ENCODE measurements at regions of chr4 and their contacts with region 1.

Region 1: GRCh38 chr4:25439918-25440477 is 62.9 kb downstream of the ANAPC4 start:
- DNase-seq: no peak
- ATAC-seq: peak; percentile 70 to 79
- H3K4me3 ChIP-seq: no peak overlapping the region
- H3K27ac ChIP-seq: no peak overlapping the region
- H3K4me1 ChIP-seq: peaks cover 13% of the 10 kb centered on the region
- H3K27me3 ChIP-seq: no peaks in the 10 kb centered on the region
- CTCF ChIP-seq: peak; percentile 92

Region 2: DNA sequence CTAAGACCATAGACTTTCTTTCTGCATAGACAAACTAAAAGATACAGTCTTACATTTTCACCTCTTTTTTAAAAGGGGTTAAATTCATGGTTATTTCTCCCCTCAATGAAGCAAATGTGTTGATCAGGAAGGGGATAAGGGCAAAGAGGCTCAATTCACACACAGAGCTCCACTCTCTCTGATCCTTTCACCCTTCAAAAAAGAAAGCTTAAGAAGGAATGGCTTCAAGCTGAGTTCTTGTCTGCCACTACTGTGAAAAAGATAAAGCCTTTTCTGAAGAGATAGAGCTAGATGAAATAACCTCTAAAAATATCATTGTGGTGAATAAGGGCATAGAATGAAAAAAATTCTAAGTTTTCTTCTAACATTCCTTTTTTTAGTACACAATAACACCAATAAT is 308.1 kb before region 1 on chr4:
- intact Hi-C with region 1: no loop called
- DNase-seq: no peak
- ATAC-seq: no peak
- H3K4me3 ChIP-seq: no peak overlapping the region
- H3K27ac ChIP-seq: no peak overlapping the region
- H3K4me1 ChIP-seq: no peaks in the 10 kb centered on the region
- H3K27me3 ChIP-seq: no peaks in the 10 kb centered on the region
- CTCF ChIP-seq: no peak

Region 3: DNA sequence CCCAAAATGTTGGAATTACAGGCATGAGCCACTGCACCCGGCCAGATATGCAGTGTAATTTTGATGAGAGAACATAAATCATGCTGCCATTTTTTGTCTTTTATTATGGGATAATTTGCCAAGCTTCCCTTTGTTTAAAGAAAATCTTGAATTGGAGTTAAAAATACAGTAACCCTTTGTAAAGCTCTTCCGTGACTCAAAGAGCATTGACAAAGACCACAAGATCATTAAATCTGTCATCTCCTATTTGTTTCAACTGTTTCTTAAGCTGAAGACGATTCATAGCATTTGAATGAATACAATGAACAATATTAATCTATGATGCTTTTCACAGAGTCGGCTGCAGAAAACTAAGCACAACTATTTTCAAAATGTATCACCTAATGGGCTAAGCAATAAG is 69.6 kb after region 1 on chr4:
- intact Hi-C with region 1: no loop called
- DNase-seq: no peak
- ATAC-seq: no peak
- H3K4me3 ChIP-seq: no peak overlapping the region
- H3K27ac ChIP-seq: no peak overlapping the region
- H3K4me1 ChIP-seq: no peaks in the 10 kb centered on the region
- H3K27me3 ChIP-seq: no peaks in the 10 kb centered on the region
- CTCF ChIP-seq: no peak

Region 4: GRCh38 chr4:25563071-25563564 is 123.1 kb after region 1 on chr4:
- intact Hi-C with region 1: loop called (anchors 10 kb)
- DNase-seq: peak; percentile 81
- ATAC-seq: peak; percentile 48 to 80
- H3K4me3 ChIP-seq: no peak overlapping the region
- H3K27ac ChIP-seq: peak overlapping the region; percentile 39
- H3K4me1 ChIP-seq: peaks cover 4% of the 10 kb centered on the region
- H3K27me3 ChIP-seq: no peaks in the 10 kb centered on the region
- CTCF ChIP-seq: no peak

Region 5: GRCh38 chr4:25654971-25655963 is 215.3 kb after region 1 on chr4 and contains the start of gene SLC34A2:
- intact Hi-C with region 1: loop called (anchors 10 kb)
- DNase-seq: peak; percentile 88
- ATAC-seq: peak; percentile 83 to 88
- H3K4me3 ChIP-seq: peak within 1 kb of the TSS; percentile 57
- H3K27ac ChIP-seq: peak within 1 kb of the TSS; percentile 87
- H3K4me1 ChIP-seq: no peaks in the 10 kb centered on the region
- H3K27me3 ChIP-seq: peaks cover 28% of the 10 kb centered on the region
- CTCF ChIP-seq: no peak
- total RNA-seq, gene SLC34A2: 2,258 TPM

Region 6: DNA sequence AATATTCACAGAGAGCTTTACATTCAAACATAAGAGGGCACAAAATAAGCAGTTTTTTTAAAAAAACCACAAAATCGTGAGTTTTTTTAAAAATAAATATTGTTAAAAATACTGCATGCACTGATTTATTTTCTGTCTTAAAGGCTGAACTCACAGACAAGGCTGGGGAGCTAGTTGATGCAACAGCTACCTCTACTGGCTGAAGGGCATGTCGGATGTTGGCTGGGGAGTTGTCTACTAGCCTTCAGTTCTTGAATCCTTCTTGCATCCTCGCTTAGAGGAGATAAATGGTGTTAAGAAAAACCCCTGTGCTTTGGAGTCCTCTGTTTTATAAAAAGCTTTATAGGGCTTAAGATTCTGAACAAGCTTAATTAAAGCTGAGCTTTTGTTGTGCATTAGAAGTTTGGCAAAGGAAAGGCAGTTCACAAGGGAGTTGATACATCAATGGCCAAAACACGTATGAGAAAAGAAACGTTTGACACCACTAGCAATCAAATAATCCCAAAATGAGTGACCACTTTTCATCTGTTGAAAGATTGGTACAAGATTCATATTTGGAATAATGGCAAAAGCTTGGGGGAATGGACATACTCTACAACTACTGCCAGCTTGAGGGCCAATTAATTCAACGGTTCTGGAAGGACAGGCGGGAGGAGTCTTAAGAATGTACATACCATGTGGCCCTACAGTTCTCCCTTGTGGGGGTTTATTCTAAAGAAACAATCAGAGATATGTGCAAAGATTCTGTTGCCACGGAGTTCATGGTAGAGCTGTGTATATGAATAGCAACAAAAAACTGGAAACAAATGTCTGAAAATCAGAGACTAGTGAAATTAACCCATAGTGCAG is 328.1 kb after region 1 on chr4:
- intact Hi-C with region 1: loop called (anchors 10 kb)
- DNase-seq: no peak
- ATAC-seq: peak; percentile 77 to 87
- H3K4me3 ChIP-seq: no peak overlapping the region
- H3K27ac ChIP-seq: no peak overlapping the region
- H3K4me1 ChIP-seq: peaks cover 7% of the 10 kb centered on the region
- H3K27me3 ChIP-seq: no peaks in the 10 kb centered on the region
- CTCF ChIP-seq: peak; percentile 70

Measured in lower lobe of right lung (tissue), 2 donors.